Astrocyte of the cerebellum (primary cell): ENCODE measurements at regions of chr3 and their contacts with region 1.

Region 1: DNA sequence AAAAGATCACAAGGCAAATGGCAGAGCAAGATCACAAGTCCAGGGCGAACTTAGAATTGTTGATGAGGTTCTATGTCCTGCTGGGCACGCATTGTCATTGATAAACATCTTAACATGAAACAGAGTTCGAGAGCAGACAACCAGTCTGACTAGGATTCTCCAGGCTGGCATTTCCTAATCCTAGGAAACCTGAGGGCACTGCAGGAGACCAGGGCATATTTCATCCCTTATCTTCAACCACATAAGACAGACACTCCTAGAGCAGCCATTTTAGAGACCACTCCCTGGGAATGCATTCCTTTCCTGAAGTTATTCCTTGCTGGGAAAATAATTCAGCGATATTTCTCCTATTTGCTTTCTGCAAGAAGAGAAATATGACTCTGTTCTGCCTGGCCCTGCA is 1199.9 kb downstream of the SI start:
- DNase-seq: no peak
- H3K4me3 ChIP-seq: no peak overlapping the region
- CTCF ChIP-seq: no peak

Region 2: DNA sequence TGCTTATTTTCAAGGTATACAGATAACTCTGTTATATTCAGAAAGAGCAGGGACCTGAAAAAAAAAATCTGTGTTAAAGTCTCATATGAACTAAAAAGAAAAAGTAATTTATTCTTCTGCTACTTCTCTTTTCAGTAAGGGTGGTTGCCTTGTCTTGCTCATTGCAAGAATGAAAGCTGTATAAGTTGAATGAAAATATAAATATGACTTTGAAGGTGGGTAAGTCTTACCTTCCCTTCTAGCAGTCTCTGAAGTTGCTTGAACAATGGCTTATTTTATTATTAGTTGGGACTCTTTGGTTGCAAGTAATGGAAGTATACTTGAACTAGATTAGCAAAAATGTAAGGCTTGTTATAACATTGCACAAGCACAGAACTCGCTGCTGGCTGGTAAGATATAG is 355.0 kb before region 1 on chr3:
- in situ Hi-C with region 1: no loop called
- DNase-seq: no peak
- H3K4me3 ChIP-seq: no peak overlapping the region
- CTCF ChIP-seq: no peak

Region 3: DNA sequence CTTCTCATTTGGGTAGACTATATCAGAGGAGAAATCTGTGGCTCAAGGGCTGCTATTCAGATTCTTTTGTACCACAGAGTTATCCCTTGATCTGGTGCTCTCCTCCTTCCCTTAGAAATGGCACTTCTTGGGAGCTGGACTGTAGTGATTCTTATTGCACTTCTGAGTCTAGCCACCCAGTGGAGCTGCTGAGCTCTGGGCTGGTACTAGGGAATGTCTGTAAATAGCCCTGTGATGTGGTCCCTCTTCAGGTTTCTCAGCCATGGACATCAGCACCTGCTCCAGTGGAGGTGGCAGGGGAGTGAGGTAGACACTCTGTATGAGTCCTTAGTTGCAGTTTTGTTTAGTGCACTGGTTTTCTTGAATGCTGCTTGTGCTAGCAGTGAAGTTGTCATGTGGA is 92.7 kb before region 1 on chr3:
- in situ Hi-C with region 1: loop called (anchors 5 kb)
- DNase-seq: no peak
- H3K4me3 ChIP-seq: no peak overlapping the region
- CTCF ChIP-seq: no peak